Dendritic cell treated with granulocyte-macrophage colony-stimulating factor and Interleukin-4, amounts not matched to agents 40 ng/mL and 50 ng/mL, for 4 days (primary cell): ENCODE measurements at regions of chr7 and their contacts with region 1.

Region 1: DNA sequence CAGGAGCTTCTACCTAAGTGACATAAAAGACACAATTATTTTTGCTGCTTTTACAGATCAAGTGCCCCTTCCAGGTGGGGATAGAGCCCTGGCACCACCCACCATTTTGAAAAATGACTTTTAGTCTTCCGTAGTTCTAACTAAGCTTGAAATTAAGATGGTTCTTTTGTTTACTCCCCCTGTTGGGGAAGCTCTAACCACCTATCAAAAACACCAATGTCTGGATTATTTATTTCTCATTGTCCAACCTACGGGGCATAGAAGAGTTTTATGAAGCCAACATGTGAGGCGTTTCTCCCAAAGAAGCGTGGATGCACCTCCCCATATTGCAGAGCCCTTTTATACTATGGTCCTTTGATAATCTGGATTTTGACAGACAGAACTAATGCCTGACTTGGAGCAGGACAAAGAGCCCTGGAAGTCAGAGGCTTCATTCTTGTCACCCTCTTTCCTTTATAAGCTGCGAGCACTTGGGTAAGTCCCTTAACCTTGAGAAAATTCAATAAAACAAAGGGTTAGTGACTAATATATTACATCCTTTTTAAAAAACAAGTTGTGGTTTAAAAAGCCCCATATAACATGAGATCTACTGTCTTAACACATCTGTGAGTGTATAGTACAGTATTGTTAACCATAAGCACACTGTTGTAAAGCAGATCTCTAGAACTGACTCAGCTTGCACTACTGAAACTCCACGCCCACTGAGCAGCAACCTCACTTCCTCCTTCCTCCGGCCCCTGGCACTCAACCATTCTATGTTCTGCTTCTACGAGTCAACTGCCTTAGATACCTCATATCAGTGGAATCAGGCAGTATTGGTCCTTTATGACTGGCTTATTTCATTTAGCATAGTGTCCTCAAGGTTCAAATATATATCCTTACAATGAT is 67.5 kb downstream of the ATXN7L1 start:
- H3K4me3 Mint-ChIP-seq: no peak overlapping the region
- H3K27ac Mint-ChIP-seq: peak overlapping the region; percentile 61
- H3K4me1 Mint-ChIP-seq: peaks cover 67% of the 10 kb centered on the region
- H3K27me3 Mint-ChIP-seq: no peaks in the 10 kb centered on the region

Region 2: GRCh38 chr7:105876091-105876963 is 67.4 kb after region 1 on chr7 and contains the start of gene ATXN7L1:
- intact Hi-C with region 1: loop called (anchors 1 kb)
- H3K4me3 Mint-ChIP-seq: peak within 1 kb of the TSS; percentile 88
- H3K27ac Mint-ChIP-seq: peak within 1 kb of the TSS; percentile 97
- H3K4me1 Mint-ChIP-seq: peaks cover 33% of the 10 kb centered on the region
- H3K27me3 Mint-ChIP-seq: peaks cover 34% of the 10 kb centered on the region